Activated T-helper 2 cell treated with anti-CD3 and anti-CD28 coated beads, Interferon-gamma antibody, Interleukin-2, Interleukin-4, amounts not matched to agents 10 μg/mL and 5 μg/mL and 100 μg/mL, durations not matched to agents 14 hours and 24 hours and 36 hours (primary cell): ENCODE measurements at regions of chr4 and their contacts with region 1.

Region 1: DNA sequence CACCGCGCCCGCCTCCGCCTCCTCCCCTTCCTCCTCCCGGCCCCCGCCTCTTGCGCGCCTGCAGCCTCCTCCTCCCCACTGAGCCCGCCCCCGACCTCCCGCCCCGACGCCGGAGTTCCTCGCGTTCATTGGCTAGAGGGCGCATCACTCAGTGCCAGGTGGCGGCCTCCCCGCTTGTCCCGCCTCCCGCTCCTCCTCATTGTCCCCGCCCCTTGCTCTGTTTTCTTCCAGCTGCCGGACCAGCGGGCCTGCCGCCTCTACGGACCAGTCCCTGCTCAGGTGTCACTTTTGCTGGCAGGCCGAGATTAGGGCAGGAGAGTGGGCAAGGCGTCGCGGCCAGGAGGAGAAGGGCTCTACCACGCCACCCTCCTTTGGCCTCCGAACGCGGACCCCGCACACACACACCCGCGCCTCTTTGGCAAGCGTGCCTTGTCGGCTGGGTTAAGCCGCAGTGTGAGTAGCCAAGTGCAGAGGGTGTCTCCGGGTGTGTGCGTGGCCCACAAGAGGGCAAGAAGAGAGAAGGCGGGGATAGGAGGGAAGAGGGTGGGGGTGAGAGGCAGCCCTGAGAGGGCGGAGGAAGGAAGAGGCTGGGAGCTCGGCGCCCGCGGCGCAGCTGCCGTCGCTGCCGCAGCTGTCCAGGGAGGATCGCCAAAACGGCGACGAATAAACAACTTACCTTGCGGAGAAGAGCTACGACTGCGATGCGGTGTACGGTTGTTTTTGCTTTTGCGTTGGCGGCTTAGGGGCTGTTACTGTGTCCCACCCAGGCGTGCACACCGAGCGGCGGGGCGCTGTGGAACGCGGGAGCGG is 436 bp upstream of the PPP3CA start:
- DNase-seq: peak; percentile 96
- H3K4me3 Mint-ChIP-seq: peak overlapping the region; percentile 87
- H3K27ac Mint-ChIP-seq: peak overlapping the region; percentile 72
- H3K4me1 Mint-ChIP-seq: peaks cover 31% of the 10 kb centered on the region
- H3K27me3 Mint-ChIP-seq: peaks cover 41% of the 10 kb centered on the region

Region 2: DNA sequence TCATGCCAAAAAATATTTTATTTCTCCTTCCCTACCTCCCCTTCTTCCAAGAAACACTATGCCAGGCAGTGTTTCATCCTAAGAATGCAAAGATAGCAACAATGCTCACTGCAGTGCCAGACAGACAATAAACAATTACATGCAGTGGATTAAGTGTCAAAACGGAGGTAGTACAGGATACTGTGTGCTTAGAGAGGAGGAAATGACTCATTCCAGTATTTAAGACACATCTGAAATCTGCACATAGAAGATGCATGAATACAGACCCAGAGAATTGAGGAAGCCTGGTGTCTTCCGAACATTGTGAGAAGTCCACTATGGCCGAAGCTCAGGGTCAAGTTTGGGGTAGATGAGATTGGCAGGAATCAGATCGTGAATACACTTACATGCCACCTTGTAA is 326.8 kb before region 1 on chr4:
- intact Hi-C with region 1: loop called (anchors 5 kb)
- DNase-seq: peak; percentile 10
- H3K4me3 Mint-ChIP-seq: peak overlapping the region; percentile 57
- H3K27ac Mint-ChIP-seq: peak overlapping the region; percentile 74
- H3K4me1 Mint-ChIP-seq: peaks cover 54% of the 10 kb centered on the region
- H3K27me3 Mint-ChIP-seq: no peaks in the 10 kb centered on the region

Region 3: GRCh38 chr4:101066624-101067170 is 281.1 kb before region 1 on chr4:
- intact Hi-C with region 1: no loop called
- DNase-seq: no peak
- H3K4me3 Mint-ChIP-seq: no peak overlapping the region
- H3K27ac Mint-ChIP-seq: no peak overlapping the region
- H3K4me1 Mint-ChIP-seq: no peaks in the 10 kb centered on the region
- H3K27me3 Mint-ChIP-seq: no peaks in the 10 kb centered on the region

Region 4: DNA sequence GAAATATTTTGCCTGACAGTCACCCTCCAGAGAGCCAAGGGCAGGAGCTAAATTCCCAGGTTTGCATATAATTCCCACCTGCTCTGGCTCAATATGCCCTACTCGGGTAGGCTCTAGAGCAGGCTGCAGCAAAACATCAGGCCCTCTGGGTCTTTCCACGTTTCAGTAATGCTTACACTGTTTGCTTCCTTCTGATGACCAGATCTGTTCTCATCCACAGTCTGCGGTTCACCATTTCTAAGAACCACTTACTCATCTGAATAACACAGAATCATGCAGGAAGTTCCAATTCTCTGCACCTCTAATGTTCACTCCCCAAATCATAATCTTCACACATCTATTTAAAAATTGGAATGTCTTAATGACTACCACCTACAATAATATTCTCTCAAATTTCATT is 141.8 kb before region 1 on chr4:
- intact Hi-C with region 1: loop called (anchors 1 kb)
- DNase-seq: peak; percentile 46
- H3K4me3 Mint-ChIP-seq: no peak overlapping the region
- H3K27ac Mint-ChIP-seq: peak overlapping the region; percentile 42
- H3K4me1 Mint-ChIP-seq: peaks cover 30% of the 10 kb centered on the region
- H3K27me3 Mint-ChIP-seq: peaks cover 2% of the 10 kb centered on the region

Region 5: DNA sequence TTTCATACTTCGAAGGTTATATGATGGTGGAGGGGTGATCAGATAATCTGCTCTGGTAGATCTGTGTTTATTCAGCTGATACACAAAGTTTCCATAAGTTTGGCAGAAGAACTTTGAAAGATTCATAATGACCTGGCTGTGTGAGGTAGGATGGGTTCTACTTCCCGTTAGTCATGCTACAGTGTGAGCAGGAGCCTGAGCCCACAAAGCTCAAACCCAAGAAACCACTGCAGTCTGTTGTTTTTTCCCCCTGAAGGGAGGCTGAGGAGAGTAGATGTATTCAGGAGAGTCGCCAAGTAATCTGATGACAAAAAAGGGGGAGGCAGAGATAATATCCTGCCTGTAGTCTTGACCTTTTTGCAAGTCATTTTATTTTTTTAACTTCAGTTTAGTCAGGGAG is 52.3 kb after region 1 on chr4:
- intact Hi-C with region 1: loop called (anchors 1 kb)
- DNase-seq: no peak
- H3K4me3 Mint-ChIP-seq: no peak overlapping the region
- H3K27ac Mint-ChIP-seq: peak overlapping the region; percentile 51
- H3K4me1 Mint-ChIP-seq: peaks cover 18% of the 10 kb centered on the region
- H3K27me3 Mint-ChIP-seq: no peaks in the 10 kb centered on the region

Region 6: DNA sequence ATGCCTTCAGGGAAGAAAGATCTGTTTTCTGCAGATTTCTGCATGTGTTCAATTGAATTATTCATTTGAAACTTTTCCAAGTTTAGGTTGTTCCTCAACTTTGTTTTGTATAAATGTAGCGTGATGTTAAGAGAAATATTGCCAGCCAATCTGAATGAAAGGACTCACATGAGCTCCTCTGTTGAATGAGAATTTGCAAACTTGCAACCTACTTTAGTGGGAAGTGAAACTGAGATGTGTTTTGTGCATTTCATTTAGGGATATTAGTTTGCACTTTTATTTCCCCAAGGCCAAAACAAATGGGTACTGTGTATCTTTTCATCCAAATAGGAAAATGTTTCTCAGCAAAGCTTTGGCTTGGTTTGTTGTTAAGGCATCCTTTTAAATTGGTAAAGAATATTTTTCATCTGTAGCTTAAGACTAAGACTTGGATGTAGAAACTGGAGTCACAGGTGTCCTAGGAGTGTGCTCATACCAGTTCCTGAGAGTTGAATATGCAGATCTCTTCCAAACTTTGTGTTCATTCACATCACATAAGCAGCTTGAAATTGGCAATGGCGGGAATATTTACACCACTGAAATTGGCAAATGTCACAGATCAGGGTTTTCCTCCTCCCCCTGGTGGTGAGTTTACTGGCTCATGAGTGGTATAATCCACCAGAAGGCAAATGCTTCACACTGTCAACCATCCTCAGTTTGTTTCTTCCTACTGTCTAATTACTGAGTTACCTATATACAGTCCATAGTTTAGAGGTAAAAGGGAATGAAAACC is 249.2 kb after region 1 on chr4:
- intact Hi-C with region 1: loop called (anchors 5 kb)
- DNase-seq: no peak
- H3K4me3 Mint-ChIP-seq: no peak overlapping the region
- H3K27ac Mint-ChIP-seq: no peak overlapping the region
- H3K4me1 Mint-ChIP-seq: peaks cover 1% of the 10 kb centered on the region
- H3K27me3 Mint-ChIP-seq: peaks cover 3% of the 10 kb centered on the region